Breast epithelium (tissue), 4 donors: ENCODE measurements at regions of chr4 and their contacts with region 1.

Region 1: DNA sequence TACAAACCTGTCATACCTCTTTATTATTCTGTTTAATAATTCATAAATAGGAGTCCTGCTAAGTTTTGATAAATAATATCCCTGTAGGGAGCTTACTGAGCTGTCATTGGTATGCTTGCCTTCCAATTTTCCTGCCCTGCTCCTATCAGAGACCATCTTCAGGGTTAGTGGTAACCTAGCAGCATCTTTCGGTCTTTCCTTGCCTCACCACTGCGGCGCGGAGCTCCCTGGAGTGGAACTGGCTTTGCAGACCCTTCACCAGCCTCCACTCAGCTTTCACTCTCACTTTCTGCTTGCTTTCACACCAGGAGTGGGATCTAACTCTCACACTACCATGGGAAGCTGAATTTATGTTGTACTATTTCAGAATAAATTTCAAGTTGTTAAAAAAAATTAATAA is 481.7 kb upstream of the ATOH1 start:
- DNase-seq: no peak
- H3K4me3 ChIP-seq: no peak overlapping the region
- H3K27ac ChIP-seq: no peak overlapping the region
- H3K4me1 ChIP-seq: no peaks in the 10 kb centered on the region
- H3K27me3 ChIP-seq: no peaks in the 10 kb centered on the region
- CTCF ChIP-seq: no peak
- POLR2A ChIP-seq: no peak

Region 2: DNA sequence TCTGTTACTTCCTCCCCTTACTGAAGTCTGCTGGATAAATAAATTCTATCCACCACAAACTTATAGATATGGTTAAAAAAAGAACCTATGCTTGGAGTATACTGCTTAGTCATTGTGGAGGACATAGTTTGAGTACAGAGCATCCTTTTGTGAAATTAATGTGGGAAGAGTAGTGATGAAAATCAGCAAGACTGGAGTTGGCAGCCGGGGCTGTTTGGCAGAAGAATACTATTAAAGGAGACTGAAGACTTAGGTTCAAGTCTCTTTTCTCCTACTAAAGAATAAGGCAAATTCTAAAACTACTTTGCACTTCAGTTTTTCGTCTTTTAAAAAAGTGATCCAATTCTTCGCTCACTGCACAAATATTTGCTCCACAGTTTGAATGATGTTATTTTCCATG is 155.1 kb after region 1 on chr4:
- intact Hi-C with region 1: no loop called
- DNase-seq: no peak
- H3K4me3 ChIP-seq: no peak overlapping the region
- H3K27ac ChIP-seq: no peak overlapping the region
- H3K4me1 ChIP-seq: no peaks in the 10 kb centered on the region
- H3K27me3 ChIP-seq: no peaks in the 10 kb centered on the region
- CTCF ChIP-seq: no peak
- POLR2A ChIP-seq: no peak

Region 3: DNA sequence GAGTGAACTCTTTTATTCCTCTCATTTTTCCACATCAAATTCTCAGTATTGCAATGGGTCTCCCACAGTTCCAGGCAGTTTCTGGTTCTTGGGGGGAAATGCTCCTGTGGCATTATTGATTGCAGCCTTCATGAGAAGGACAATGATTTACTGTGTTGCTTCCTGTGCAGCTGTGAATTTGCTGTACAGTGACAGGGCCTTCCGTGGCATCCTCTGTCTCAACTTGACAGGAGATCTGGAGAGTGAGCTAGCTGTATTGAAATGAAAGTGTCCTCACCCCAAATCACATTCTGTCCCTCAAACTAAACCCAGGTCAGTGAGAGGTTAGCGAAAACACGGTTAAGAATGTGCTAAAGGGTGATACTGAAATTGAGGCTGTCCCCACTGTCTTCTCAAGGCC is 404.6 kb after region 1 on chr4:
- intact Hi-C with region 1: loop called (anchors 5 kb)
- DNase-seq: no peak
- H3K4me3 ChIP-seq: no peak overlapping the region
- H3K27ac ChIP-seq: no peak overlapping the region
- H3K4me1 ChIP-seq: no peaks in the 10 kb centered on the region
- H3K27me3 ChIP-seq: no peaks in the 10 kb centered on the region
- CTCF ChIP-seq: no peak
- POLR2A ChIP-seq: no peak

Region 4: DNA sequence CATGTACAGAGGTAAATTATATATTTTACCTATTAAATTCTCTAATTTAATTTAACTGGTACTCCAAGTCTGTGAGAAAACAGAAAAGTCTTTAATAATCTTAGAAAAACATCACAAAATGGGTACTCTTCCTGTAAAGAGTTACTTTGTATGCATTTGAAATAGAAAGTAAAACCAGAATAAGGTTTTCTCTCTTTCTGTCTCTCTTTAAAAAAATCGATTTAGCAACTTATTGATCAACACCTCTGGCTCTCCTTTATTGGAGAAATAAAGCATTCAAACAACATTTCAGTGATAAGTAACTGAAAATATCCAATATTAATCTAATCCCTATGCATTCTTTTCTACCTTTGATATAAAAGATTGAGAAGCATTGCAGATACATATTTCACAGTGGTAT is 509.1 kb after region 1 on chr4:
- intact Hi-C with region 1: no loop called
- DNase-seq: no peak
- H3K4me3 ChIP-seq: no peak overlapping the region
- H3K27ac ChIP-seq: no peak overlapping the region
- H3K4me1 ChIP-seq: no peaks in the 10 kb centered on the region
- H3K27me3 ChIP-seq: no peaks in the 10 kb centered on the region
- CTCF ChIP-seq: no peak
- POLR2A ChIP-seq: no peak

Region 5: DNA sequence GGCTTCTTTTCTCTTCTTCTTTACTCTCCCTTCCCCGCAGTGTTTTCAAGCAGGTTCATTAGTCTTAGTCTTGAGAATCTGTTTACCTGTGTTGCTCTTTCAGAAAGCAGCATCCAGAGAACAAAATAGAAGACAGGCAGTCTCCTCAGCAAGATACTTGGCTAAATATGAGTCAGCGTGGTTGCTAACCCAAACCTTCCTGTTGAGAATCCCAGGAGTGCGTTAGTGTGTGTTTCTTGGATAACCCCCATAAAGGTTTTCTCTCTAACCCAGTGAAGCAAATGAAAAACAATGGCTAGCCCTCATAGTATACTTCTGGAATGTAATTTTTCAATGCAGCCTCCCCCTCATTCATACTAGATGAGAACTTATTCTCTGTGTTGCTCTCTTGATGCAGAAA is 1452.0 kb after region 1 on chr4:
- intact Hi-C with region 1: no loop called
- DNase-seq: no peak
- H3K4me3 ChIP-seq: no peak overlapping the region
- H3K27ac ChIP-seq: no peak overlapping the region
- H3K4me1 ChIP-seq: no peaks in the 10 kb centered on the region
- H3K27me3 ChIP-seq: no peaks in the 10 kb centered on the region
- CTCF ChIP-seq: no peak
- POLR2A ChIP-seq: no peak